Kidney (tissue), 22 donors: ENCODE measurements at regions of chr3 and their contacts with region 1.

Region 1: DNA sequence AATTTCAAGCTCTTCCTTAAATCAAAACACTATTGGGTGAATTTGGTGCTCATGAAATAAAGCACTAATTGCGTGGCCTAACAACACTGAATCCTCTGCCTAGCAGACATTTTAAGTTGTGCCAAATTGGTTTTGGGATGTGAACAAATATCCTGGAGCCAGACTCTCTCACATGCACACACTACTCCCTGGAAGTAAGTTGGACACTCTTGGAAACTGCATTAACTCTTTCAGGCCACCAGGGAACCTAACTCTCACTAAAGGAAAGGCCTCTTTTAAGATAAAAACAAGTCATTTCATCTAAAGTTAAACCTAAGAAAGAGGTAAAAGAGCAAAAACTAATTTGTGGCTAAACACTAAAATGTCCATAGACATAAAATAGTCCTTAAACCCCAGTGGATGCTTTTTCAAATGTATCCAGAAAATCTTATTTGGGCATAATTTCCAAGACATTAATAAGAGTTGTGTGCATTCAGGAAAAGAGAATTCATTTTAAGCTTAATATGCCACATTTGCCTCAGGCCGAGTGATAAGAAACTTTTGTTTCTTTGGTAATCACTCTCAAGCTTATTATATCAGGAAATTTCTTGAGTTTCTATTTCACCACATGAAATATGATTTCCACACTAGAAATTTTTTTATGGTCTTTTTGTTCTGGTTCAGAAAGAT is 61.8 kb downstream of the ZBTB20 start:
- DNase-seq: no peak
- H3K4me3 ChIP-seq: no peak overlapping the region
- H3K27ac ChIP-seq: no peak overlapping the region
- H3K4me1 ChIP-seq: peaks cover 0 to 14% (median 0%) of the 10 kb centered on the region in 3 donors
- H3K27me3 ChIP-seq: no peaks in the 10 kb centered on the region
- CTCF ChIP-seq: no peak

Region 2: DNA sequence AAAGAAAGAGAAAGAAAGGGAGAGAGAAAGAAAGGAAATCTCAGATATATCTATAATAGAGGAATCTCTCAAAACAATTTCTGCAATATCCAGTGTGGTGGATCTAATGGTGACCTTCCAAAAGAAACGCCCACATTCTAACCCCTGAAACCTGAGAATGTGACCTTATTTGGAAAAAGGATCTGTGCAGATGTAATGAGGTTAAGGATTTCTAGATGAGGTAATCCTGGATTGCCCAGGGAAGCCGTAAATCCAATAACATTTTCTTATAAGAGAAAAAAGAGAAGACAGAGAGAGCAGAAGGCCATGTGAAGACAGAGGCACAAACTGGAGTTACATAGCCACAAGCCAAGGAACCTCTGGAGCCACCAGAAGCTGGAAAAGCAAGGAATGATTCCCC is 245.9 kb before region 1 on chr3:
- intact Hi-C with region 1: loop called (anchors 10 kb)
- DNase-seq: peak in 2 of 5 donors; percentile 22 to 39
- H3K4me3 ChIP-seq: no peak overlapping the region
- H3K27ac ChIP-seq: no peak overlapping the region
- H3K4me1 ChIP-seq: peaks cover 0 to 10% (median 0%) of the 10 kb centered on the region in 3 donors
- H3K27me3 ChIP-seq: no peaks in the 10 kb centered on the region
- CTCF ChIP-seq: no peak